ENCODE measurements at regions of chr4 and their contacts with region 1.

Region 1: DNA sequence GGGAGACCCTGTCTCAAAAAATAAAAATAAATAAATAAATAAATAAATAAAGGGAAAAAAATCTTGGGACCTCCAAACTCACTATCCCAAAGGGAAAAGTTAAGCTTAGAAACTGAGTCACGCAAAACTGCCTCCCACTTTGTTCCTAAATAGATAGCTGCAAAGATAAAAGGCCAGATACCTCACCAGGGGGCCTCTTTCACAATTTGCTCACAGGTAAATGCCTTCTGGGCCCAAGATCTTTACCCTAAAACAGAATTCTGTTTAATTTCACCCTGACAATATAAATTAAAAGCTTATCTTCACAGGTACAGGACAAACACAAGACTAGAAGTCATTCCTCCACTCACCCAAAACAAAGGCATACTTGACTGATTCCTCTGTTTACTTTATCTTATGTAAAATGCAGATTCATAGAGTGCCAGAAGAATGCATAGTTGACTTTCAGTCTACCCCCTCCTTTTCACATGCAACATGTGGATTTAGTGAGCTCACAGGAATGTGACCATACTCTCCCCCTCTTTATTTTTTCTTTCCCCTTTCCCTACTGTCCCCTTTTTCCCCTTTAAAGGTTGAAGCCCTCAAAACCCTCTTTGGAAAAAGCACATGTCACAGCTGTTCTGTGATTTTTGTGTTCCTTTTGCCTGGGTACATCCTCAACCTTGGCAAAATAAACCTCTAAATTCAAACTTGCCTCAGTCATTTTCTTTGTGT is 23.4 kb downstream of the ELF2 start:
- DNase-seq: no peak

Region 2: GRCh38 chr4:139167774-139168444 is 14.3 kb after region 1 on chr4:
- CTCF ChIA-PET with region 1: interaction called, 10 read pairs
- POLR2A ChIA-PET with region 1: interaction called, 3 read pairs
- DNase-seq: peak; percentile 19

Measured in HEK293T (cell line).